BJ (cell line): ENCODE measurements at regions of chr4 and their contacts with region 1.

Region 1: DNA sequence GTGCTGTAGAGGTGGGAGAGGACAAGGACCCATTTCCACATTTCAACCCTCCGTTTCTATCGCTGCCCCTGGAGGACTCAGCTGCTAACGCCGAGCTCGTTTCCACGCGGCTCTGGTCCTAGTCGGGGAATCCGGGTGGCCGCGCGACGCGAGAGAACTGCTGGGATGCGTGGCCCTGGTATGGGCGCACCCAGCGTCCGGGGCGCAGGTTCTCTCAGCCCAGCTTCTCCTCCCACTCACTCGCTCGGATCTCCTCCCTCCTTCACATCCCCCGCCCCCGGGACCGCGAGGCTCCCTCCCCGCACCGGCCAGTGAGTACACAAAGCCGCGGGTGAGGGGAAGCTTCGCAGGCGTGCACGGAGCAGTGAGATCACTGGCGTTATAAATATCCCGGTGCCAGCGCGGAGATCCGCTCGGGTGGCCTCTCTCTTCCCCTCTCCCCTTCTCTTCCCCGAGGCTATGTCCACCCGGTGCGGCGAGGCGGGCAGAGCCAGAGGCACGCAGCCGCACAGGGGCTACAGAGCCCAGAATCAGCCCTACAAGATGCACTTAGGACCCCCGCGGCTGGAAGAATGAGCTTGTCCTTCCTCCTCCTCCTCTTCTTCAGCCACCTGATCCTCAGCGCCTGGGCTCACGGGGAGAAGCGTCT is at the start of gene FGF5:
- DNase-seq: peak; percentile 58
- H3K4me3 ChIP-seq: peak within 1 kb of the TSS; percentile 89
- H3K27me3 ChIP-seq: no peaks in the 10 kb centered on the region
- CTCF ChIP-seq: no peak
- polyA plus RNA-seq, gene FGF5: 31.1 and 43.7 TPM in 2 replicates

Region 2: DNA sequence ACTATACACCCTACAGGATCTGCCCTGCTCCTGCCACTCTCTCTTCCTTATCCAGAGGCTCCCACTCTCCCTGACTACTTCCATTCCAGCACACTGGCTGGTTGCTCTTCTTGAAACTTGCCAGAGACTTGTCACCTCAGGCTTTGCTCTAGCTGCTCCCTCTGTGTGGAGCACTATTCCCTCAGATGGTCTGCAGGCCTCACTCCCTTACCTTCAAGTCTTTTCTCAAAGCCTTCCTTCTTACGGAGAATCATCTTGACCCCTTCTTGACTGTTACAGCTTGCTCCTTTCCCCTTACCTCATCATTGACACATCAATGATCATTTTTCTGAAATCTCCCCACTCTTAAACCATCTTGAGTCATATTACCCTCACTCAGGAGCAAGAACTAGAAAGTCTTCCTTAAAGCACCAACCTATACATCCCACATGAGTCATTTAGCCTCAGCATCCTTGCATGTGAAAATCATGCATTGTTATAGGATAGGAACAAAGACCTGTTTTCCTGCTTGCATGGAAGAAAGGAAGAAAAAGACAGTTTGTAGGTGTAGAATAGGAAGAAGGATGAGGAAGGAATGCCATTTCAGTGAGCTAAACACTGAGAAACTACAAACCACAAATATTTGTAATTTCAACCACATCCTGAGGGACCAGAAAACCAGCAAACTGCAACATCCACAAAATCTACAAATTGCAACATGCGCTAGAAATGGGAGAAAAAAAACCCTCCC is 249.1 kb before region 1 on chr4:
- CTCF ChIA-PET with region 1: no interaction called
- POLR2A ChIA-PET with region 1: no interaction called
- DNase-seq: peak; percentile 70
- H3K4me3 ChIP-seq: no peak overlapping the region
- H3K27me3 ChIP-seq: no peaks in the 10 kb centered on the region
- CTCF ChIP-seq: no peak

Region 3: DNA sequence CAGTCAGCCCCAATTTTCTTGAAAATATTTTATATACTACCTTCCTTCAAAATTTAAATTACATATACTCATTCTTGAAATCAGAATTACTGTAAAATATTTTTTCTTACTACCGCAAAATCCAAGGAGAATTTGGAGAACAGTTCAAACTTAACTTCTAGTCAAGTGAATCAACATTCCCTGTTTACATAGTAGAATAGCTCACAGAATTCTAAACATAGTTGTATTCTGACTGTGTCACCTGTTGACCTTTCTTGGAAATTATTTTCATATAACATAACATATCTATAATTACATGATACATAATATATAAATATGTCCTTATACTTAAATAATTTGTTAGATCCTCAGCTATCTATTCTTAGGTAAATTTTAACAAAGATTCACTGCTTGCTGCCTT is 30.9 kb before region 1 on chr4:
- CTCF ChIA-PET with region 1: interaction called, 17 read pairs
- POLR2A ChIA-PET with region 1: interaction called, 3 read pairs
- DNase-seq: no peak
- H3K4me3 ChIP-seq: no peak overlapping the region
- H3K27me3 ChIP-seq: no peaks in the 10 kb centered on the region
- CTCF ChIP-seq: no peak

Region 4: GRCh38 chr4:80279751-80280150 is 13.4 kb after region 1 on chr4:
- CTCF ChIA-PET with region 1: interaction called, 10 read pairs
- POLR2A ChIA-PET with region 1: interaction called, 8 read pairs
- DNase-seq: no peak
- H3K4me3 ChIP-seq: no peak overlapping the region
- H3K27me3 ChIP-seq: no peaks in the 10 kb centered on the region
- CTCF ChIP-seq: no peak